CD4-positive, alpha-beta T cell (primary cell): ENCODE measurements at regions of chr3 and their contacts with region 1.

Region 1: DNA sequence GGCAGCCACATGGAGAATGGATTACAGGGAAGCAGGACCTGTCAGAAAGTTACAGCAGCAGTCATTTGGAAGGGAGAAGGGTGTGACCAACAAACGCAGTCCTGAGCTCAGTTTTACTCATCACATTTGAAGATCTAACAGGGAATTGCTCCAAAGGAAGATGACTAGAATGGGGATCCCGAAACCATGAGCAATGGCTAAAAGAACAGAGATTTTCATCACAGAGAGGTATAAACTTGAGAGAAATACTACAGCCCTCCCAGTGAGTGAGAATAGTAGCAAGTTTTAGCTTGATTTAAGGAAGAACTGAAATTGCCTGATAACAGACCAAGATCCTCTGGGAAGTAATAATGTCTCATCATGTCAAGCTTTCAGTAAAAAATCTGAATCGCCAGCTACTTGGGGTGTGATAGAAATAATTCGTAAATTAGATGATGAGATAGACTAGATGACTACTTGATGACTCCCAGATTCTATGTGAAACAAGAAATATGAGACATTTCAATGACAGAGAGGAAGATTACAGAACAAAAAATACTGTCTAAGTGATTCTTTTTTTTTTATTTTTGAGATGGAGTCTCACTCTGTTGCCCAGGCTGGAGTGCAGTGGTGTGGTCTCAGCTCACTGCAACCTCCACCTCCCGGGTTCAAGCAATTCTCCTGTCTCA is 16.9 kb downstream of the CD47 start:
- DNase-seq: no peak
- ATAC-seq: no peak
- H3K4me3 ChIP-seq: no peak overlapping the region
- H3K4me3 Mint-ChIP-seq: peak overlapping the region; percentile 39
- H3K27ac ChIP-seq: no peak overlapping the region
- H3K27ac Mint-ChIP-seq: peak overlapping the region; percentile 23
- H3K4me1 ChIP-seq: peaks cover 15% of the 10 kb centered on the region
- H3K4me1 Mint-ChIP-seq: peaks cover 93% of the 10 kb centered on the region
- H3K27me3 ChIP-seq: no peaks in the 10 kb centered on the region
- H3K27me3 Mint-ChIP-seq: no peaks in the 10 kb centered on the region
- CTCF ChIP-seq: no peak

Region 2: GRCh38 chr3:107861904-107862303 is 212.0 kb before region 1 on chr3:
- CTCF ChIA-PET with region 1: no interaction called
- POLR2A ChIA-PET with region 1: no interaction called
- intact Hi-C with region 1: no loop called
- DNase-seq: no peak
- ATAC-seq: no peak
- H3K4me3 ChIP-seq: no peak overlapping the region
- H3K4me3 Mint-ChIP-seq: no peak overlapping the region
- H3K27ac ChIP-seq: no peak overlapping the region
- H3K27ac Mint-ChIP-seq: no peak overlapping the region
- H3K4me1 ChIP-seq: no peaks in the 10 kb centered on the region
- H3K4me1 Mint-ChIP-seq: no peaks in the 10 kb centered on the region
- H3K27me3 ChIP-seq: no peaks in the 10 kb centered on the region
- H3K27me3 Mint-ChIP-seq: no peaks in the 10 kb centered on the region
- CTCF ChIP-seq: no peak

Region 3: DNA sequence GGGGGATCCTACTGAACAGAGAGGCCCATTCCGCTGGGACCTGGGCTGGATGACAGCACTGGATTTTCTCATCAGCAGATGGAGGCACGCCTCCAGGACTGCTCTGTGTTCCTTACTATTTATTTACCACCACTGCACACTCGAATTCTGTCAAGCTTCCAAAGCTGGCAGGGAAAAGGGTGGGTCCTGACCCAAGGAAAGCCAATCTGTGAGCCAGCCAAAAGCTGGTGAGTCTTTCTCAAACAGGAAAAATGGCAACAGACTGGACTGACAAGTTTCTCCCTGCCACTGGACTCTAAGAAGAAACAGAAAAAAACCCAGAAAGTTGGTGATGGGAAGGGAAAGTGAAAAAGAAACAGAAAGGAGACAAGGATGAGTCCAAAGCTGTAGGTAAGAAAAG is 20.8 kb before region 1 on chr3:
- CTCF ChIA-PET with region 1: interaction called, 4 read pairs
- POLR2A ChIA-PET with region 1: no interaction called
- intact Hi-C with region 1: loop called in 1 of 2 experiments (anchors 1 kb)
- DNase-seq: no peak
- ATAC-seq: no peak
- H3K4me3 ChIP-seq: no peak overlapping the region
- H3K4me3 Mint-ChIP-seq: no peak overlapping the region
- H3K27ac ChIP-seq: no peak overlapping the region
- H3K27ac Mint-ChIP-seq: peak overlapping the region; percentile 74
- H3K4me1 ChIP-seq: peaks cover 11% of the 10 kb centered on the region
- H3K4me1 Mint-ChIP-seq: peaks cover 63% of the 10 kb centered on the region
- H3K27me3 ChIP-seq: no peaks in the 10 kb centered on the region
- H3K27me3 Mint-ChIP-seq: no peaks in the 10 kb centered on the region
- CTCF ChIP-seq: no peak